Endothelial cell of umbilical vein (primary cell): ENCODE measurements at regions of chr6 and their contacts with region 1.

Region 1: GRCh38 chr6:71012866-71013469 is 56.1 kb upstream of the B3GAT2 start:
- DNase-seq: peak; percentile 39
- H3K4me3 ChIP-seq: no peak overlapping the region
- H3K27ac ChIP-seq: no peak overlapping the region
- H3K4me1 ChIP-seq: no peaks in the 10 kb centered on the region
- H3K27me3 ChIP-seq: no peaks in the 10 kb centered on the region
- CTCF ChIP-seq: peak; percentile 69 to 71
- POLR2A ChIP-seq: no peak

Region 2: GRCh38 chr6:70706491-70707123 is 306.4 kb before region 1 on chr6:
- CTCF ChIA-PET with region 1: interaction called, 4 read pairs
- POLR2A ChIA-PET with region 1: no interaction called
- dilution Hi-C with region 1: no loop called
- intact Hi-C with region 1: loop called (anchors 1 kb)
- DNase-seq: peak; percentile 60
- H3K4me3 ChIP-seq: no peak overlapping the region
- H3K27ac ChIP-seq: no peak overlapping the region
- H3K4me1 ChIP-seq: peaks cover 10% of the 10 kb centered on the region
- H3K27me3 ChIP-seq: no peaks in the 10 kb centered on the region
- CTCF ChIP-seq: peak; percentile 23 to 30
- POLR2A ChIP-seq: no peak

Region 3: DNA sequence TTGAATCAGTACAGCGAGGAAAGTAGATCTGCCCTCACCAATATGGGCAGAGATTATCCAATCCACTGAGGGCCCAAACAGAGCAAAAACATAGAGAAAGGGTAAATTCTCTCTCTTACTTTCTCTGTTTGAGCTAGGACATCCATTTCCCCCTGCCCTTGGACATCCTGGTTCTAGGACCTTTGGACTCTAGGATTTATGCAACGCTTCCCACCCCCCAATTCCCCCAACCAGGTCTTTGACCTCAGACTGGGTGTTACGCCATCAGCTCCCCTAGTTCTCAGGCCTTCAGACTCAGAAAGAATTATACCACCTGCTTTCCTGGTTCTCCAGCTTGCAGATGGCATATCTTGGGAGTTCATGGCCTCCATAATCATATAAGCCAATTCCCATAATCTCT is 45.9 kb before region 1 on chr6:
- CTCF ChIA-PET with region 1: no interaction called
- POLR2A ChIA-PET with region 1: no interaction called
- dilution Hi-C with region 1: no loop called
- intact Hi-C with region 1: no loop called
- DNase-seq: no peak
- H3K4me3 ChIP-seq: no peak overlapping the region
- H3K27ac ChIP-seq: no peak overlapping the region
- H3K4me1 ChIP-seq: no peaks in the 10 kb centered on the region
- H3K27me3 ChIP-seq: peaks cover 0 to 1% of the 10 kb centered on the region in 2 experiments
- CTCF ChIP-seq: no peak
- POLR2A ChIP-seq: no peak

Region 4: GRCh38 chr6:71056656-71057055 is 43.7 kb after region 1 on chr6:
- CTCF ChIA-PET with region 1: no interaction called
- POLR2A ChIA-PET with region 1: no interaction called
- dilution Hi-C with region 1: no loop called
- intact Hi-C with region 1: loop called (anchors 1 kb)
- DNase-seq: no peak
- H3K4me3 ChIP-seq: no peak overlapping the region
- H3K27ac ChIP-seq: no peak overlapping the region
- H3K4me1 ChIP-seq: no peaks in the 10 kb centered on the region
- H3K27me3 ChIP-seq: no peaks in the 10 kb centered on the region
- CTCF ChIP-seq: no peak
- POLR2A ChIP-seq: no peak